Activated CD4-positive, alpha-beta memory T cell treated with anti-CD3 and anti-CD28 coated beads, Interleukin-2, amount 10 ng/mL, durations not matched to agents 7 days and 5 days (primary cell): ENCODE measurements at regions of chr1 and their contacts with region 1.

Region 1: DNA sequence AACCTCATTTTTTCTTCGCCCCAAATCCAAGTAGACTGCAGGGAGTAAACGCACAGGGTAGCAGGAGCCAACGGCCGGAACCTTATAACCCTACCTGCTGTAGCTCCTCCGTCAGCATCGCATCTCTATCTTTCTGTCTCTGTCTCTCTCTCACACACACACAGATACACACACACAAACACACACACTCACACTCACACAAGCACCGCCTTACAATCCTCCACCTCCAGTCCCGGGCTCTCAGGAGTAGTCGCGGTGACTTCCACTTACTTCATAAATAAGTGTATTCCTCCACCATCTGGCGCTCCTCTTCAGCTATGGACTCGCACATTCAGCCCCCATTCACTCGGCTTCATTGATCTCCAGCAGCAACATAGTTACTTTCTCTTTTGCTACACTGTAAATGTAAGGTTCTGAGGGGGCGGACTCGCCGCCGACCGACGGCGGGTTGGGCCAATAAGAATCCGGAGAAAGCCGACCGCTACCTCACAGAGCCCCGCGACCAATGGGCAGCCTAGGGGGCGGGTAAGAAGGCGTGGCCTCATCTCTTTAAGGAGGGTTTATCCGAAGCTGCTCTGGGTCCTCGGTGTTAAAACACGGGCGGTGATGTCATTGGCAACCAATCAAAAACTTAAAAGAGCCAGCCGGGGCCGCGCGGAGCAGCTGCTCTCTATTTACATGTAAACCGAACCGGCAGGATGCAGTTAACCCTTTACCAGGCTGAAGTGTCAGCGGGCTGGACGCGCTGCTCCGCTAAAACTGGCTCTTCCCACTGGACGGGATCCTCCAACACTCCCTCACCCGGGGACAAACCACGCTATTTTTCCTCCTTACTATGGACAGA is at the start of gene DUSP10:
- DNase-seq: peak; percentile 99
- H3K4me3 Mint-ChIP-seq: no peak within 1 kb of the TSS
- H3K27ac Mint-ChIP-seq: peak within 1 kb of the TSS; percentile 82
- H3K4me1 Mint-ChIP-seq: peaks cover 11% of the 10 kb centered on the region
- H3K27me3 Mint-ChIP-seq: no peaks in the 10 kb centered on the region
- total RNA-seq, gene DUSP10: 18.8 to 20.5 TPM

Region 2: GRCh38 chr1:221543529-221544120 is 198.3 kb before region 1 on chr1:
- CTCF ChIA-PET with region 1: interaction called, 14 read pairs
- POLR2A ChIA-PET with region 1: interaction called, 4 read pairs
- DNase-seq: no peak
- H3K4me3 Mint-ChIP-seq: no peak overlapping the region
- H3K27ac Mint-ChIP-seq: no peak overlapping the region
- H3K4me1 Mint-ChIP-seq: no peaks in the 10 kb centered on the region
- H3K27me3 Mint-ChIP-seq: peaks cover 4% of the 10 kb centered on the region

Region 3: GRCh38 chr1:221699577-221699976 is 42.4 kb before region 1 on chr1:
- CTCF ChIA-PET with region 1: no interaction called
- POLR2A ChIA-PET with region 1: interaction called, 13 read pairs
- DNase-seq: no peak
- H3K4me3 Mint-ChIP-seq: no peak overlapping the region
- H3K27ac Mint-ChIP-seq: no peak overlapping the region
- H3K4me1 Mint-ChIP-seq: peaks cover 11% of the 10 kb centered on the region
- H3K27me3 Mint-ChIP-seq: no peaks in the 10 kb centered on the region

Region 4: GRCh38 chr1:221725735-221726672 is 15.9 kb before region 1 on chr1:
- CTCF ChIA-PET with region 1: interaction called, 9 read pairs
- POLR2A ChIA-PET with region 1: interaction called, 174 read pairs
- DNase-seq: no peak
- H3K4me3 Mint-ChIP-seq: peak overlapping the region; percentile 39
- H3K27ac Mint-ChIP-seq: peak overlapping the region; percentile 88
- H3K4me1 Mint-ChIP-seq: peaks cover 73% of the 10 kb centered on the region
- H3K27me3 Mint-ChIP-seq: no peaks in the 10 kb centered on the region

Region 5: GRCh38 chr1:221783936-221784335 is 42.0 kb after region 1 on chr1:
- CTCF ChIA-PET with region 1: interaction called, 7 read pairs
- POLR2A ChIA-PET with region 1: interaction called, 29 read pairs
- DNase-seq: no peak
- H3K4me3 Mint-ChIP-seq: no peak overlapping the region
- H3K27ac Mint-ChIP-seq: peak overlapping the region; percentile 66
- H3K4me1 Mint-ChIP-seq: peaks cover 57% of the 10 kb centered on the region
- H3K27me3 Mint-ChIP-seq: no peaks in the 10 kb centered on the region